OCI-LY7 (cell line): ENCODE measurements at regions of chr5 and their contacts with region 1.

Region 1: GRCh38 chr5:126808521-126808988 is 31.6 kb downstream of the LMNB1 start:
- DNase-seq: peak; percentile 56
- H3K4me3 ChIP-seq: peak overlapping the region; percentile 14
- H3K27ac ChIP-seq: peak overlapping the region; percentile 76
- H3K4me1 ChIP-seq: peaks cover 43% of the 10 kb centered on the region
- CTCF ChIP-seq: peak; percentile 80

Region 2: GRCh38 chr5:126339215-126339805 is 469.2 kb before region 1 on chr5:
- CTCF ChIA-PET with region 1: no interaction called
- POLR2A ChIA-PET with region 1: no interaction called
- intact Hi-C with region 1: loop called (anchors 5 kb)
- DNase-seq: peak; percentile 74
- H3K4me3 ChIP-seq: no peak overlapping the region
- H3K27ac ChIP-seq: no peak overlapping the region
- H3K4me1 ChIP-seq: no peaks in the 10 kb centered on the region
- CTCF ChIP-seq: peak; percentile 98

Region 3: GRCh38 chr5:126568206-126568755 is 240.3 kb before region 1 on chr5:
- CTCF ChIA-PET with region 1: no interaction called
- POLR2A ChIA-PET with region 1: no interaction called
- intact Hi-C with region 1: no loop called
- DNase-seq: peak; percentile 65
- H3K4me3 ChIP-seq: no peak overlapping the region
- H3K27ac ChIP-seq: no peak overlapping the region
- H3K4me1 ChIP-seq: peaks cover 12% of the 10 kb centered on the region
- CTCF ChIP-seq: no peak

Region 4: DNA sequence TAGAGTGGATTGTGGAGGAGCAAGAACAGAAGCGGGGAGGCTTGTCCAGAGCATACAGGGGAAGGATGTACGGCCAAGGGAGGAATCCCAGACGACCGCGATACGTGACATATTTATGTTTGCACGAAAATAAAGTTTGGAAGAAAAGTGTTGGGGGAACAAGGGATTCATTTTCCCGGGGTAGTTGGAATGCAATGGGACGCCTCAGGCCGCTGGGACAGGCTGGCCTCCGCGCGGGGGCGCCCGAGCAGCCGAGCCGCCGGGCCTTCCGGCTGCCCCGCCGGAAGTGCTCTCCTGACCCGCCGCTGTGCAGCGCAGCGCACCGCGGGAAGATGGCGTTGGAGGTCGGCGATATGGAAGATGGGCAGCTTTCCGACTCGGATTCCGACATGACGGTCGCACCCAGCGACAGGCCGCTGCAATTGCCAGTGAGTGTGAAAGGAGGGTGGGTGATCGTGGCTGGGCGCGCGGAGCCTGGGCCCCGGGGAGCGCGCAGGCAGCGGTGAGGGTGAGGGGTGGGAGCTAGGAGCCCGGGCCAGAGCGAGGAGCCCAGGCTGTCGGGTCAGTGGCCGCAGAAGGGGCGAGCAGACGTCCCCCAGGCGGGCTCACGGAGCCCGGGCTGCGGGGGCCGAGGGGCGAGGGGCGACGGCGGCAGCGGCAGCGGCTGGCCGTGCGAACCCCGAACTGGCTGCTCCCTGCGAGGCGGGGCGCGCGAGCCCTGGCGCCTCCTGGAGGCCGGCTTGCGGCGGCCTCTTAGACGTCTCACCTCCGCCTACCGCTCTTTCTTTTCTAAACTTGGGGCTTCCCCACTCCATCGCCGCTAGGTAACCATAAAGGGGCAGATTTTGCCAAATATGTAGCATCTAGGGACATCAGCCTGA is 207.7 kb before region 1 on chr5 and contains the start of gene PHAX:
- CTCF ChIA-PET with region 1: no interaction called
- POLR2A ChIA-PET with region 1: interaction called, 12 read pairs
- intact Hi-C with region 1: no loop called
- DNase-seq: peak; percentile 90
- H3K4me3 ChIP-seq: peak within 1 kb of the TSS; percentile 86
- H3K27ac ChIP-seq: peak within 1 kb of the TSS; percentile 97
- H3K4me1 ChIP-seq: peaks cover 36% of the 10 kb centered on the region
- CTCF ChIP-seq: peak; percentile 82
- total RNA-seq, gene PHAX: 73.8 and 89.7 TPM in 2 replicates

Region 5: GRCh38 chr5:126676195-126676624 is 132.3 kb before region 1 on chr5:
- CTCF ChIA-PET with region 1: no interaction called
- POLR2A ChIA-PET with region 1: interaction called, 3 read pairs
- intact Hi-C with region 1: loop called (anchors 1 kb)
- DNase-seq: peak; percentile 82
- H3K4me3 ChIP-seq: no peak overlapping the region
- H3K27ac ChIP-seq: no peak overlapping the region
- H3K4me1 ChIP-seq: peaks cover 15% of the 10 kb centered on the region
- CTCF ChIP-seq: peak; percentile 95

Region 6: GRCh38 chr5:126794157-126794828 is 14.3 kb before region 1 on chr5:
- CTCF ChIA-PET with region 1: no interaction called
- POLR2A ChIA-PET with region 1: interaction called, 10 read pairs
- intact Hi-C with region 1: no loop called
- DNase-seq: peak; percentile 30
- H3K4me3 ChIP-seq: no peak overlapping the region
- H3K27ac ChIP-seq: no peak overlapping the region
- H3K4me1 ChIP-seq: peaks cover 55% of the 10 kb centered on the region
- CTCF ChIP-seq: no peak

Region 7: GRCh38 chr5:126826619-126827215 is 18.2 kb after region 1 on chr5:
- CTCF ChIA-PET with region 1: interaction called, 6 read pairs
- POLR2A ChIA-PET with region 1: interaction called, 10 read pairs
- intact Hi-C with region 1: loop called (anchors 2 kb)
- DNase-seq: no peak
- H3K4me3 ChIP-seq: no peak overlapping the region
- H3K27ac ChIP-seq: no peak overlapping the region
- H3K4me1 ChIP-seq: no peaks in the 10 kb centered on the region
- CTCF ChIP-seq: no peak